Activated naive CD8-positive, alpha-beta T cell treated with anti-CD3 and anti-CD28 coated beads, Interleukin-2, amount 10 ng/mL, durations not matched to agents 7 days and 5 days (primary cell): ENCODE measurements at regions of chr5 and their contacts with region 1.

Region 1: DNA sequence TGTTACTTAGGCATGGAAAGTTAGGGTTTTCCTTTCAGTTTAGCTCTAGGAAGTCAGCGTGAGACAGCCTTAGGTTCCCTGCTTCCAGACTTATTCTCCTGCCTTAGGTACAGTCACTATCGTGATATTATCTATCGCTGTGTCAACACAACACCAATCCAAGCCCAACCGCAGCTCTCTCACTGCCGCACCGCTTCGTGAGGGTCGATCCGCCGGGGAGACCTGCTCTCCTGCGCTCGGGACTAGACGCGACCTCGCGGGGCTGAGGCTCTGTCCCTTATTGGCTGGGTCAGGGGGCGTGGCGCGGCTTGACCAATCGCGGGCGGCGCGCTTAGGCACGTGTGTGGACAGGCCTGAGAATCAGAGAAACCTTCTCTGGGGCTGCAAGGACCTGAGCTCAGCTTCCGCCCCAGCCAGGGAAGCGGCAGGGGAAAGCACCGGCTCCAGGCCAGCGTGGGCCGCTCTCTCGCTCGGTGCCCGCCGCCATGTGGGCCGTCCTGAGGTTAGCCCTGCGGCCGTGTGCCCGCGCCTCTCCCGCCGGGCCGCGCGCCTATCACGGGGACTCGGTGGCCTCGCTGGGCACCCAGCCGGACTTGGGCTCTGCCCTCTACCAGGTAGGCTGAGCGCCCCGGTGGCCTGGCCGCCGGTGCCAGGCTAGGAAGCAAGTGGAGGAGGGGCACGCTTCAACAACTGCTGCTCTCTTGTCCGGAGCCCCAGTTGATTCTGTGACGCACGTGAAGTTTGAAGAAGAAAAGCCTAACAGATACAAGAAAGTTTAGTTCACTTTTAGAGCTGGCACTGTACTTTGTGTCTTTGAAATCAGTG is at the start of gene MCCC2:
- DNase-seq: peak; percentile 97
- ATAC-seq: peak; percentile 99
- H3K4me3 Mint-ChIP-seq: peak within 1 kb of the TSS; percentile 98
- H3K27ac Mint-ChIP-seq: peak within 1 kb of the TSS; percentile 99
- H3K4me1 Mint-ChIP-seq: peaks cover 25% of the 10 kb centered on the region
- H3K27me3 Mint-ChIP-seq: no peaks in the 10 kb centered on the region
- total RNA-seq, gene MCCC2: 37.1 to 42.6 TPM

Region 2: DNA sequence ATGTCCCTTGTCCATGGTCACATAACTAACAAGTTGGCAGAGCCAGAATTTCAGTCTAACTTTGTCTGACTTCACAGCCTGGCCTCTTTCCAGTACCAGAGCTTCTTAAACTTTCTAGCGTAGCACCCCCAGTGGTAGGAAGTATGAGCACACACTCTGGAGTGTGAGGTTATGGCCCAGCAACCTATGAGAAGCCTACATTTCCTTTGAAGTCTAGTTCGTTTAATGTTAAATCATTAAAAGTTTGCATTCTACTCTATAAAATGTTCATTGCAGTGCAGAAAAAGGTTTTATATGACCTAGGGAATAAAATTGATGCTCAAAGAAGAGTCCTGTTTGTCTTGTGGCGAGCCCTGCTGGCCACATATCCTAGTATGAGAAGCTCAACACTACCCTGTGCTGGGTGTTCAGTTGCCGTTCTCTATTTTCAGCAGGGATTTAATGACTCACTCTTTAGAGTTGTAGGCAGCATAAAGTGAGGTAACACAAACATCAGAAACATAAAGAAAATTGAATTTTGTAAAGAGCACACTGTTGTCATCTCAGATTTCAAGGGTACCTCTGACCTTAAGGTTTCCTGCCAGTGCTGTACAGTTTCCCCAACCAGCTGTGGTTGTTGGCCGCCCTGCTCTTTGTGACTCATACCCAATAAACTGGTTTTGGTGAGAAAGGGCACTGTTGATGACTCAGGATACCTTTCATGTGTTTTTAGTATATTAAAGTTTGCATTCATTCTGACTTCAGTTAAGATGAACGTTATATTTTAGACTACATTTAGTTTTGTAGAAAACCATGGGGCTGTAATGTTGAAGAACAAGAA is 14.3 kb after region 1 on chr5:
- POLR2A ChIA-PET with region 1: interaction called, 34 read pairs
- DNase-seq: peak; percentile 65
- ATAC-seq: peak; percentile 92
- H3K4me3 Mint-ChIP-seq: peak overlapping the region; percentile 71
- H3K27ac Mint-ChIP-seq: peak overlapping the region; percentile 95
- H3K4me1 Mint-ChIP-seq: peaks cover 32% of the 10 kb centered on the region
- H3K27me3 Mint-ChIP-seq: no peaks in the 10 kb centered on the region

Region 3: DNA sequence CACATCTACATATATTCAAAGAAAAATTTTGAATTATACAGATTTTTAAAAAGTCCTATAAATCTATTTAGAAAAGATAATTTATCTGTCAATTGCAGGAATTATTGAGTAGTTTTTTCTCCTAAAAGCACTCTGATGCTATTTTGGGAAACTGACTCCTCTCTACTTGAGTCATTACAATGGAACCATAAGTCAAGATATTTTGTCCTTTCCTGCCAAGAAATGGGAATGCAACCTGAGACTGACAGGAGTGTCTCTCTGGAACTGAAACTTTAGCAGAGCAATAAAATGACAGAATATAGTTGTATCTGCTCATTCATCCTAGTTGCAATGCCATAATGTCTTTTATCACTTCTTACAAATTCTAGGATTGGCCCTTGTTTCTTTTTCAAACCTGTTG is 180.5 kb after region 1 on chr5:
- POLR2A ChIA-PET with region 1: no interaction called
- DNase-seq: no peak
- ATAC-seq: no peak
- H3K4me3 Mint-ChIP-seq: no peak overlapping the region
- H3K27ac Mint-ChIP-seq: no peak overlapping the region
- H3K4me1 Mint-ChIP-seq: peaks cover 7% of the 10 kb centered on the region
- H3K27me3 Mint-ChIP-seq: peaks cover 10% of the 10 kb centered on the region